Activated CD4-positive, alpha-beta T cell treated with anti-CD3 and anti-CD28 coated beads, Interleukin-2, amount 10 ng/mL, durations not matched to agents 7 days and 5 days (primary cell): ENCODE measurements at regions of chr3 and their contacts with region 1.

Region 1: DNA sequence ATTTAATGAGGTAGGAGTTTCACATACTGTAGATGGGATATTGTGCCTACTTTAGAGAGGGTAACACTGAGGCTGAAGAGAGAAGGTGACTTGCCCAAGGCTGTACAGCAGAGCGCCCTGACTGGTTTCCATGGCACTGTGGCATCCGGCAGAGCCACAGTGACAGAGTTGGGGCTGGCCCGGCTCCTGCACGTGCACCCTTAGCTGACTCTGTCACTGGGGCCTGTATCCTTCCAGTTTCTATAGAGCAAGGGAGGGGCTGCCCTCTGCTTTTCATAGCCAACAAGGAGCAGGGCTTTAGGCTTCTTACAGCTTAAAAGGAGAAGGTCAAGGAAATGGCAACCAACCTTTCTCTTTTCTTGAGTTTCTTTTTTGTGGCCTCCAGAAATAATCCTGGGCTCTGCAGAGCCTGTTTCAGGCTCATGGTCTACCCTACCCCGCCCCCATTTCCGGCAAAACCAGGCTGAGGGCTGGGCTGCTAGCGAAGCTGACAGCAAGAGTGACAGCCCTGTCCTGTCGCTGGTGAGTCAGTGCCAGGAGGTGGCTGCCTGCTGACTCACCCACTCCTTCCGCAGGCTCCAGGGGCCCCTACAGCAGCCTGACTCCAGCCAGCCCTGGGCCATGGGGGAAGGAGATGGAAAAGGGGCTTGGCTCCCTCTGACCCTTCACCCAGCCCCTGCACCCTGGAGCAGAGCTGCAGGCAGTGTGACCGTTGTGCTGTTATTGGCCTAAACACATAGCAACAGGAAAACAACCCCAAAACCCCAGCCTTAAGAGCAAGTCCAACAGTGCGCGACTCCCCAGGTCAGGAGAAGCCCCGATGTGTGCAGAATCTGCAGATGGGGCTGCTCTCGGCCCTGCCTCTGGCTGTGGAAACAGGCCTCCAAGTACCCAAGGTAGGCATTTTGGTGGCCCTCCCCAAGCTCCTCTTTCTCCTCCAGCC is 29.8 kb downstream of the SLC6A6 start:
- DNase-seq: peak; percentile 97
- H3K4me3 Mint-ChIP-seq: peak overlapping the region; percentile 72
- H3K27ac Mint-ChIP-seq: peak overlapping the region; percentile 96
- H3K4me1 Mint-ChIP-seq: peaks cover 88% of the 10 kb centered on the region
- H3K27me3 Mint-ChIP-seq: no peaks in the 10 kb centered on the region

Region 2: DNA sequence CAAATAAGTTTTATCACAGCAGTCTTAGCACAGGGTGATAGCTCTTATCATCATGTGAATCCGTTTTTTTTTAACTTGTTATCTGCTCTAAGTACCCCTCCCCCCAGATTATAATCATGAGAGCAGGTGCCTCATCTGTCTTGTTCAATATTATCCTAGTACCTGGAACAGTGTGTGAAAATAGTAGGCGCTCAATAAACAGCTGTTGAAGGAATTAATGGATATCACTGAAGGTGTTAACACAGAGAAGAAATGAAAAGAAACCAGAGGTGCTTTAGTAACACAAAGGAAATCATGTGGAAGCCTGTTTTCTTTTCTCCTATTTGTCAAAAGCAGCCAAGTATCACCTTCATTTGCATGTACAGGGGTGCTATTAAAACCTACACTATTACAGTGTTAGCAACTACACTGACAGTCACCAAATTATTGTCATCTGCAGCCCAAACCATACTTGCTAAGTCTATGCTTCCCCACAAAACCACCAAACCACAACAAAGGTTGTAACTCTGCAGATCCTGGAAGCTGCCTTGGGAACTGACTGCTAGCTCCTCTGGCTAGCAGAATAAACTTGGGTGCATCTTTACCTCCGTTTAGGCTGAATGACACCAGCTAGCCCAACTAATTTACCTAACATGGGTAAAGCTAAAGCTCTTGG is 256.7 kb before region 1 on chr3:
- CTCF ChIA-PET with region 1: no interaction called
- POLR2A ChIA-PET with region 1: no interaction called
- DNase-seq: peak; percentile 89
- H3K4me3 Mint-ChIP-seq: peak overlapping the region; percentile 11
- H3K27ac Mint-ChIP-seq: peak overlapping the region; percentile 72
- H3K4me1 Mint-ChIP-seq: peaks cover 67% of the 10 kb centered on the region
- H3K27me3 Mint-ChIP-seq: no peaks in the 10 kb centered on the region

Region 3: GRCh38 chr3:14289590-14290461 is 142.3 kb before region 1 on chr3:
- CTCF ChIA-PET with region 1: no interaction called
- POLR2A ChIA-PET with region 1: no interaction called
- DNase-seq: no peak
- H3K4me3 Mint-ChIP-seq: no peak overlapping the region
- H3K27ac Mint-ChIP-seq: no peak overlapping the region
- H3K4me1 Mint-ChIP-seq: no peaks in the 10 kb centered on the region
- H3K27me3 Mint-ChIP-seq: peaks cover 14% of the 10 kb centered on the region

Region 4: GRCh38 chr3:14402304-14402811 is 29.8 kb before region 1 on chr3 and contains the start of gene SLC6A6:
- CTCF ChIA-PET with region 1: interaction called, 5 read pairs
- POLR2A ChIA-PET with region 1: interaction called, 12 read pairs
- DNase-seq: peak; percentile 95
- H3K4me3 Mint-ChIP-seq: peak within 1 kb of the TSS; percentile 98
- H3K27ac Mint-ChIP-seq: peak within 1 kb of the TSS; percentile 99
- H3K4me1 Mint-ChIP-seq: peaks cover 55% of the 10 kb centered on the region
- H3K27me3 Mint-ChIP-seq: no peaks in the 10 kb centered on the region
- total RNA-seq, gene SLC6A6: 42.0 to 43.1 TPM